ENCODE measurements at regions of chr7 and their contacts with region 1.

Region 1: GRCh38 chr7:42167206-42167605 is 69.8 kb downstream of the GLI3 start:
- DNase-seq: no peak
- ATAC-seq: no peak
- H3K4me3 ChIP-seq: no peak overlapping the region
- H3K4me3 Mint-ChIP-seq: no peak overlapping the region
- H3K27ac ChIP-seq: no peak overlapping the region
- H3K27ac Mint-ChIP-seq: no peak overlapping the region
- H3K4me1 ChIP-seq: no peaks in the 10 kb centered on the region
- H3K4me1 Mint-ChIP-seq: no peaks in the 10 kb centered on the region
- H3K27me3 ChIP-seq: no peaks in the 10 kb centered on the region
- H3K27me3 Mint-ChIP-seq: no peaks in the 10 kb centered on the region
- CTCF ChIP-seq: no peak

Region 2: GRCh38 chr7:41916450-41916959 is 250.7 kb before region 1 on chr7:
- intact Hi-C with region 1: no loop called
- DNase-seq: no peak
- ATAC-seq: no peak
- H3K4me3 ChIP-seq: no peak overlapping the region
- H3K4me3 Mint-ChIP-seq: no peak overlapping the region
- H3K27ac ChIP-seq: no peak overlapping the region
- H3K27ac Mint-ChIP-seq: no peak overlapping the region
- H3K4me1 ChIP-seq: no peaks in the 10 kb centered on the region
- H3K4me1 Mint-ChIP-seq: no peaks in the 10 kb centered on the region
- H3K27me3 ChIP-seq: no peaks in the 10 kb centered on the region
- H3K27me3 Mint-ChIP-seq: peaks cover 8 to 11% of the 10 kb centered on the region in 2 donors
- CTCF ChIP-seq: no peak

Region 3: GRCh38 chr7:42014625-42015546 is 152.3 kb before region 1 on chr7:
- intact Hi-C with region 1: loop called (anchors 5 kb)
- DNase-seq: peak; percentile 24 to 31
- ATAC-seq: peak in 1 of 3 donors; percentile 62
- H3K4me3 ChIP-seq: no peak overlapping the region
- H3K4me3 Mint-ChIP-seq: no peak overlapping the region
- H3K27ac ChIP-seq: no peak overlapping the region
- H3K27ac Mint-ChIP-seq: no peak overlapping the region
- H3K4me1 ChIP-seq: no peaks in the 10 kb centered on the region
- H3K4me1 Mint-ChIP-seq: peaks cover 6 to 7% of the 10 kb centered on the region in 2 donors
- H3K27me3 ChIP-seq: no peaks in the 10 kb centered on the region
- H3K27me3 Mint-ChIP-seq: peaks cover 2 to 7% of the 10 kb centered on the region in 2 donors
- CTCF ChIP-seq: peak; percentile 74

Region 4: DNA sequence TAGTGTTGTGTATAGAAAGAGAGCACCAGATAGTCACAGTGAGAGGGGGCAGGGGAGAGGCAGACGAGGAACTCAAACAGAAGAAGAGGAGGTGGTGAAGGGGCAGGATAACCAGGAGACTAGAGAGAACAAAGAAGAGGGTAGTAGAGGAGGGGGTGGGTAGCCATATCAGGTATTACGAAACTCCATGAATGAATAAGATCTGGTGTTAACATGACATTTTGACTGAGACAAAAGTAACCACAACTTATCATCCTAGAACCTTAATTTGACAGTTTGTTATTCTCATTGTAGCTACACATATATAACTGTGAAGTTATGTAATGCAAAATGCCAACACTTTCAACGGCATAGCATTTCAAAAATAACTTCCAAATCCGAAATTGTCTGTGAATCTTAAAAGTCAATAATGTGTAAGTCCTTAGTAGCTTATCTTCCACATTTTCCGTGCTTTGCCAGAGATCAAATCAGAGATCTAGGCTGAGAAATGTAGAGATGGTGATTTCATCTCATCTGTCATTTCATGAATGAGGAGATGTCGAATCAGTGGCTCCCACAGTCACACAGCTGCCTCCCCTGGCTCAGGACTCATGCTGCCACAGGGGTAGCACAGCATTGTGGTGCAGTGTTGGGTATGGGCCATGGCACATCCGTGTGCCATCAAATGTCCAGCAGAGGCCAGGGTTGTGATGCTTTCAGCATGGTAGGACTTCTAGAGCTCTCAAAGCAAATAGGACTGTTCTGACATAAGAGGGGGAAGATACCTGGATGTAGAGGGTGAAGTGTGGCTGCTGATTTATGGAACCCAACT is 1147.4 kb after region 1 on chr7:
- intact Hi-C with region 1: no loop called
- DNase-seq: no peak
- ATAC-seq: no peak
- H3K4me3 ChIP-seq: no peak overlapping the region
- H3K4me3 Mint-ChIP-seq: no peak overlapping the region
- H3K27ac ChIP-seq: no peak overlapping the region
- H3K27ac Mint-ChIP-seq: no peak overlapping the region
- H3K4me1 ChIP-seq: no peaks in the 10 kb centered on the region
- H3K4me1 Mint-ChIP-seq: no peaks in the 10 kb centered on the region
- H3K27me3 ChIP-seq: no peaks in the 10 kb centered on the region
- H3K27me3 Mint-ChIP-seq: no peaks in the 10 kb centered on the region
- CTCF ChIP-seq: no peak

Measured in natural killer cell (primary cell).